IMR-90 (cell line): ENCODE measurements at regions of chr12 and their contacts with region 1.

Region 1: GRCh38 chr12:50825372-50825838 is 17.3 kb upstream of the TMPRSS12 start:
- DNase-seq: peak; percentile 83
- ATAC-seq: peak; percentile 79
- H3K4me3 ChIP-seq: no peak overlapping the region
- H3K27ac ChIP-seq: no peak overlapping the region
- H3K4me1 ChIP-seq: peaks cover 2% of the 10 kb centered on the region
- H3K27me3 ChIP-seq: no peaks in the 10 kb centered on the region
- CTCF ChIP-seq: peak; percentile 67
- POLR2A ChIP-seq: no peak
- RAD21 ChIP-seq: peak; percentile 67

Region 2: DNA sequence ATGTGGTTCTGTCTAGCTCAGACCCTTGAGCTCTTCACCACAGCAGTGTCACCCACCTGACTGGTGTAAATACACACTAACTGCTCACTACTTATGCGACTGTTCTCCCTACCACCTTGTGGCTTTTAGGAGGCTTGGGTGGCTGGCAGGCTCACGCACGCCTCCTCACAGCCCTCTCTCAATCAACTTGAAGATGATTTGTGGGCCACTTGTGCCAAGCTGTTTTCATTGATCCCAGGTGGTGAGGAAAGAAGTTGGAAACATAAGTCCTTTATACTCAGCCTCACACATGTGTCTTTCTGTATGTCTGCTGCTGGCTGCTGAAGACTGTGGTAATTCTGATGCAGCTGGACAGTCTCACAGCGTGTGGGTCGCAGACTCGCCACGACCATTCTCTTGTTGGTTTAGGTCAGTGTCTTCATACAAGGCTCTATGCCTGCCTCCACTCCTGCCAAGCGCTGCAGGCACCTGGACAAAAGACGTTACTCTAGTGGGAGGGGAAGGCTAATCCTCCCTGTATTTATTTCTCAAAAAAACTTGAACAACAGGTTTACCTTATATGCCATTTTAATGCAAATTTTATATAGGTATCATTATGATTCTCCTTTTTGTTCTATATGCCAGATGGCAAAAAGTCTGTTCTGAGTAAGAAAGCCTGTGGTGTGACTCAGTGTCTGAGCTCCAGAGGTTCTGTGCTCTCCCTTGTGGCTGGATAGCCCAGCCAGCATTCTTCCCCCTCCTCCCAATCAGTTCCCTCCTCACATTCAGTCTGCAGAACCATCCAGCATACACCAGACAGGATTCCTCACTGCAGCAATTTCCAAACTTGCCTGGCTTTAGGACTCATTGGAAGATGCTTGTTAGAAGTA is 205.1 kb before region 1 on chr12:
- CTCF ChIA-PET with region 1: no interaction called
- POLR2A ChIA-PET with region 1: no interaction called
- dilution Hi-C with region 1: no loop called
- in situ Hi-C with region 1: no loop called
- intact Hi-C with region 1: no loop called
- DNase-seq: peak; percentile 95
- ATAC-seq: peak; percentile 94
- H3K4me3 ChIP-seq: no peak overlapping the region
- H3K27ac ChIP-seq: peak overlapping the region; percentile 39
- H3K4me1 ChIP-seq: peaks cover 23% of the 10 kb centered on the region
- H3K27me3 ChIP-seq: no peaks in the 10 kb centered on the region
- CTCF ChIP-seq: 0 out of 2 replicates have a peak, but pooled peaks have one; percentile 17
- POLR2A ChIP-seq: no peak
- RAD21 ChIP-seq: no peak; the same call in 1 of the 2 replicates

Region 3: DNA sequence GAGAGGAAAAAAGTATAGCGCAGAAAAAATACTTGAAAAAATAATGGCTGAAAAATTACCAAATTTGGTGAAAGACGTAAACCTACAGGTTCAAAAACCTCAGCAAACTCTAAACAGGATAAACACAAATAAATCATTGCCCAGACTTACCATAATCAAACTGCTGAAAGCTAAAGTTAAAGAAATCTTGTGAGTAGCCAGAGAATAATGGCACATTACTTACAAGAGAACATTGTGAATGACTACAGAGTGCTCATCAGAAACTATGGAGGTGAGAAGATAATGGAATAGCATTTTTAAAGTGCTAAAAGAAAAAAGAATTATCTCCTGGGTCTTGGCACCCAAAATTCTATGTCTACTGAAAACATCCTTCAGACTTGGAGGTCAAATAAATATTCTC is 25.5 kb before region 1 on chr12:
- CTCF ChIA-PET with region 1: interaction called, 3 read pairs
- POLR2A ChIA-PET with region 1: interaction called, 17 read pairs
- dilution Hi-C with region 1: no loop called
- in situ Hi-C with region 1: no loop called
- intact Hi-C with region 1: no loop called
- DNase-seq: no peak
- ATAC-seq: no peak
- H3K4me3 ChIP-seq: no peak overlapping the region
- H3K27ac ChIP-seq: no peak overlapping the region
- H3K4me1 ChIP-seq: no peaks in the 10 kb centered on the region
- H3K27me3 ChIP-seq: no peaks in the 10 kb centered on the region
- CTCF ChIP-seq: no peak
- POLR2A ChIP-seq: no peak
- RAD21 ChIP-seq: no peak

Region 4: DNA sequence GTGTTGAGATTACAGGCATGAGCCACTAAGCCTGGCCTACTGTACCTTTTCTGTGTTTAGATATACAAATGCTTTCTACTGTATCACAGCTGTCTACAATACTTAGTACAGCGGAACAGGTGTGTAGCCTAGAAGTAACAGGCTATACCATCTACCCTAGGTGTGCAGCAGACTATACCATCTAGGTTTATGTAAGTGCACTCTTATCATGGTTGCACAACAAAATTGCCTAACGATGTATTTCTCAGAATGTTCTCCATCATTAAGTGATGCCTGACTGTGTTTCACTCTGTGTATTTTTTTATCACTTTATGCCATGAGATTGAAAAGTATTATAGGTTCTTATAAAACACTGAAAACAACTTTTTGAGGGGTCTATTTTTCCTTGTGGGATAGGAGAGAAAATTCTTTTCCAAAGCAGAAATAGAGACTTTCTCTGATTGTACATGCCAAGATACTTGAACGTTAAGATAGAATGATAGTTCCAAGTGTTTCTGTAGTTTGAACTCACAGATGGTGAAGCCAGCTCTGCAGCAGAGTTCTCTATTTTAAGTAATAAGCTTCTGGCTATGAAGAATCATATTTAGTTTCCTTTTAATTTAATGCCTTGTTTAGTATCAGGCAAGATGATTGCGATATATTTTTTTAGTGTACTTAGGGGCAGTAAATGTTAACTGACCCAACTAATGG is 34.4 kb after region 1 on chr12:
- CTCF ChIA-PET with region 1: no interaction called
- POLR2A ChIA-PET with region 1: no interaction called
- dilution Hi-C with region 1: no loop called
- in situ Hi-C with region 1: no loop called
- intact Hi-C with region 1: no loop called
- DNase-seq: no peak
- ATAC-seq: no peak
- H3K4me3 ChIP-seq: no peak overlapping the region
- H3K27ac ChIP-seq: no peak overlapping the region
- H3K4me1 ChIP-seq: peaks cover 3% of the 10 kb centered on the region; the same call in 1 of the 2 replicates
- H3K27me3 ChIP-seq: no peaks in the 10 kb centered on the region
- CTCF ChIP-seq: no peak
- POLR2A ChIP-seq: no peak
- RAD21 ChIP-seq: no peak

Region 5: GRCh38 chr12:51025836-51026638 is 200.6 kb after region 1 on chr12 and contains the start of gene SLC11A2:
- CTCF ChIA-PET with region 1: no interaction called
- POLR2A ChIA-PET with region 1: no interaction called
- dilution Hi-C with region 1: no loop called
- in situ Hi-C with region 1: no loop called
- intact Hi-C with region 1: loop called (anchors 2 kb)
- DNase-seq: peak; percentile 90
- ATAC-seq: peak; percentile 93
- H3K4me3 ChIP-seq: peak within 1 kb of the TSS; percentile 76
- H3K27ac ChIP-seq: peak within 1 kb of the TSS; percentile 95
- H3K4me1 ChIP-seq: peaks cover 6% of the 10 kb centered on the region
- H3K27me3 ChIP-seq: no peaks in the 10 kb centered on the region
- CTCF ChIP-seq: 0 out of 2 replicates have a peak, but pooled peaks have one; percentile 6
- POLR2A ChIP-seq: 0 out of 2 replicates have a peak, but pooled peaks have one; percentile 46
- RAD21 ChIP-seq: 0 out of 2 replicates have a peak, but pooled peaks have one; percentile 1
- total RNA-seq, gene SLC11A2: 45.3 and 48.3 TPM in 2 replicates

Region 6: GRCh38 chr12:51183816-51184215 is 358.4 kb after region 1 on chr12:
- CTCF ChIA-PET with region 1: no interaction called
- POLR2A ChIA-PET with region 1: no interaction called
- dilution Hi-C with region 1: no loop called
- in situ Hi-C with region 1: no loop called
- intact Hi-C with region 1: no loop called
- DNase-seq: peak; percentile 67
- ATAC-seq: peak; percentile 88
- H3K4me3 ChIP-seq: no peak overlapping the region
- H3K27ac ChIP-seq: no peak overlapping the region
- H3K4me1 ChIP-seq: 0 out of 2 replicates have a peak, but pooled peaks cover 2% of the 10 kb centered on the region
- H3K27me3 ChIP-seq: peaks cover 2% of the 10 kb centered on the region
- CTCF ChIP-seq: no peak
- POLR2A ChIP-seq: no peak
- RAD21 ChIP-seq: no peak